ENCODE measurements at regions of chr3 and their contacts with region 1.

Region 1: DNA sequence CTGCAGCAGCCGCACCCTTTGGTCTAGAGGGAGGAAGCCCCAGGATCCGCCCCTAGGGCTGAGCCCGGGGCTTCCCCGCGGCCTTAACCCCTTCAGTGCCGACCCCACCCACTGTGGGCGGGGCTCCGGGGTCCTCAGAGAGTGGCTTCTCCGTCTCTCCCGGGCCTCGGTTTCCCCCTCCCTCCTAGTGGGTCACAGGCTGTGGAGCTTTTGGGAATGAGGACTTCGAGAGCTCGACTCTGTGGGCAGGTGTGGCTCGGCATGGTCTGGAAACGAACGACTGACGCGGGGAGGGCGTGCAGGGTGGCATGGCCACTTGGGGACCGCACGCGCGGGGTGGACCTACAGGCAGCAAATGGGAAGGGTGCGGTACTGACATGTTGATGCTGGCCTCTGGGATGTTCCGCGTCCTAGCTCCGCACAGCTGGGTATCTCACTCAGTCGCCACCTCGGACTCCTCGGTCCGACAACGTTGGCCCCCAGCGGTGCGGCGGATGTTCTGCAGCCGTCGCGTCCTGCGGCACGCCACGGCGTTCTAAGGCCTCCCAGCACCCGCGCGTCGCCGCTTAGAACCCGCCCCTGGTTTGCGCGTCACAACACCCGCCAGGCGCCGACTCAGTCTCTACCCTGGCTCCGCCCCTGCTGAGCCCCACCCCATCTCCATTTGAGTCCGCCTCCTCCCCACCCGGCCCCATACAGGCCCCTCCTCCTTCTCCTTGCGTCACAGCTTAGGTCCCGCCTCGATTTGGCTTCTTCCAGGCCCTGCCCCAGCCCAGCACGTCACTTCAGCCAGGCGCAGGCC is at the starts of genes HYAL3 and NAA80:
- DNase-seq: peak; percentile 99
- H3K4me3 Mint-ChIP-seq: peak within 1 kb of the TSS; percentile 94
- H3K27ac Mint-ChIP-seq: peak within 1 kb of the TSS; percentile 95
- H3K4me1 Mint-ChIP-seq: peaks cover 15% of the 10 kb centered on the region
- H3K27me3 Mint-ChIP-seq: no peaks in the 10 kb centered on the region
- total RNA-seq, gene HYAL3: 7.9 and 8.0 TPM in 2 replicates
- total RNA-seq, gene NAA80: 18.1 and 19.6 TPM in 2 replicates

Region 2: DNA sequence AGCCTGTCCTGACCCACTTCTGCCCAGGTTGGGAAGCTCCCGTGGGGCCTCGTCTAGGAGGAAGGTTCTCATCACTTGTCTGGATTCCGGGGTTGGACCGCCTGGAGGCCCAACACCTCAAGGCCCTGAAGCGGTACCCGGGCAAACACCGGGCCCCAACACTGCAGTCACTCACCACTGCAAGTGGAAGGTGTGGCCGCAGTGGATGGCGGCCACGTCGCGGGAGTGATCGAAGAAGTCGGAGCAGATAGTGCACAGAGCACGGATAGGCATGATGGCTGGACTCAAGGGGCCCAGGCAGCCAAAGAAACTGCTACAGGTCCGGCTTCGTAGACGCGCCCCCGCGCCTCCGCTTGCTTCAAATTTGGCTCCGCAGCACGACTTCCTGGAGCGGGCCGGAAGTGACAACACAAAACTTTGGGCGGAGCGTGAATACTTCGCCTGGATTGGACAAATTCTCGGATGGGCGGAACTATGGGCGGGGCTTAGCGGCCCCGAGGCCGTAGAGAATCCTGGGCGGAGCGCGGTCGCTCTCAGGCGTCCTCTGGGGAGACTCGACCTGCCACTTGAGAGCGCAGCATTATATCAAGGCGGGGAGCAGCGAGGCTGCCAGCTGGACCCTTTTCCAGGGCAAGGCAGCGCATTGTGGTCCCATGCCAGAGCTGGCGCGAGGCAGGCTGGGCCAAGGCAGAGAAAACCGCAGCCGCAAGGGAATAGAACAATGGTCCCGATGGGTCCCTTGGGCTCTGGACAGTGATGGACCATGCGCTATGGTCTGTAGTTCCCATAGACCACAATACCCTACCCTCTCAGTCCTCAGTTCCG is 442.6 kb before region 1 on chr3 and contains the start of gene TRAIP:
- intact Hi-C with region 1: loop called (anchors 2 kb)
- DNase-seq: peak; percentile 93
- H3K4me3 Mint-ChIP-seq: peak within 1 kb of the TSS; percentile 97
- H3K27ac Mint-ChIP-seq: peak within 1 kb of the TSS; percentile 93
- H3K4me1 Mint-ChIP-seq: peaks cover 18% of the 10 kb centered on the region
- H3K27me3 Mint-ChIP-seq: no peaks in the 10 kb centered on the region
- total RNA-seq, gene TRAIP: 26.5 and 27.9 TPM in 2 replicates

Region 3: GRCh38 chr3:50192689-50193141 is 106.3 kb before region 1 on chr3:
- intact Hi-C with region 1: loop called (anchors 1 kb)
- DNase-seq: peak; percentile 72
- H3K4me3 Mint-ChIP-seq: no peak overlapping the region
- H3K27ac Mint-ChIP-seq: no peak overlapping the region
- H3K4me1 Mint-ChIP-seq: peaks cover 6% of the 10 kb centered on the region
- H3K27me3 Mint-ChIP-seq: peaks cover 18% of the 10 kb centered on the region

Region 4: GRCh38 chr3:50245831-50246516 is 53.1 kb before region 1 on chr3:
- intact Hi-C with region 1: loop called (anchors 1 kb)
- DNase-seq: peak; percentile 88
- H3K4me3 Mint-ChIP-seq: peak overlapping the region; percentile 82
- H3K27ac Mint-ChIP-seq: peak overlapping the region; percentile 98
- H3K4me1 Mint-ChIP-seq: peaks cover 70% of the 10 kb centered on the region
- H3K27me3 Mint-ChIP-seq: no peaks in the 10 kb centered on the region

Region 5: GRCh38 chr3:50337191-50337841 is 38.3 kb after region 1 on chr3:
- intact Hi-C with region 1: loop called (anchors 1 kb)
- DNase-seq: peak; percentile 96
- H3K4me3 Mint-ChIP-seq: peak overlapping the region; percentile 96
- H3K27ac Mint-ChIP-seq: peak overlapping the region; percentile 97
- H3K4me1 Mint-ChIP-seq: peaks cover 51% of the 10 kb centered on the region
- H3K27me3 Mint-ChIP-seq: no peaks in the 10 kb centered on the region

Region 6: DNA sequence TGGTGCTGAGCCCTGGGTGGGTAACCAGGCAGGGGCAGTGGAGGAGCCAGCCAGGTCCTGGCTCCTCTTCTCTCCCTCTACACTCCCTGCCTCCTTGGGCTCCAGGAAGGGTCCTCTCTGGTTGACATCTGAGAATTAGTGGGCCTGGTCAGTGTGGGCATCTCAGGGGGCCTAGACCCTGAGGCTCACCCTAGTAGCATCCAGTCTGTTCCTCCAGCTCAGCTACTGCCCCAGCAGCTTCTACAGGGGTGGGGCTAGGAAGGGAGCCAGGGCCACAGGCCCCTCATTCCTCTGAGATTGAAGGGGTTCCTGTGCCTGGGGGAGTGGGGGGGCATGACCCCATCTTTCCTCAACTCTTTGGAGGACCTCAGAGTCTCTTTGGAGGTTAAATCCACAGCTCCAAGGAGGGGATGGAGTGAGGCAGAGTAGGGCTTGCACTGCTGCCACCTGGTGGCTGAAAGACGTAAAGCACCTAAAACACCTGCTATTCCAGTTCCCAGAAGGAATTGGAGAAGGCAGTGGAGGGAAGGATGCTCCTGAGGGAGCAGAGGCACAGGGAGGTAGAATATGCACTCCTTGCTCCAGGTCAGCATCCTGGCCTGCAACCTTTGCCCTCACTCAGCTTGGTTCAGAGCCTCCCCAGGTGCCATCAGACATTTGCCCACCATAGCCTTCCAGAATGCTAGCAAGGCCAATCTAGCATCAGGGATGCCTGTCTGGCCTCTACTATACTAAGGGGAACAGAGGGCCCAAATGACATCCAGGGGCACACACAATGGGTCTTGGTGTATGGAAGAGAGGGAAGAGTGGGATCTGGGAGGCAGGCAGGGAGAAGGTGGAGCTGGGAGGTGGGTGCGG is 243.4 kb after region 1 on chr3:
- intact Hi-C with region 1: no loop called
- DNase-seq: peak; percentile 28
- H3K4me3 Mint-ChIP-seq: no peak overlapping the region
- H3K27ac Mint-ChIP-seq: no peak overlapping the region
- H3K4me1 Mint-ChIP-seq: no peaks in the 10 kb centered on the region
- H3K27me3 Mint-ChIP-seq: peaks cover 19% of the 10 kb centered on the region

Region 7: DNA sequence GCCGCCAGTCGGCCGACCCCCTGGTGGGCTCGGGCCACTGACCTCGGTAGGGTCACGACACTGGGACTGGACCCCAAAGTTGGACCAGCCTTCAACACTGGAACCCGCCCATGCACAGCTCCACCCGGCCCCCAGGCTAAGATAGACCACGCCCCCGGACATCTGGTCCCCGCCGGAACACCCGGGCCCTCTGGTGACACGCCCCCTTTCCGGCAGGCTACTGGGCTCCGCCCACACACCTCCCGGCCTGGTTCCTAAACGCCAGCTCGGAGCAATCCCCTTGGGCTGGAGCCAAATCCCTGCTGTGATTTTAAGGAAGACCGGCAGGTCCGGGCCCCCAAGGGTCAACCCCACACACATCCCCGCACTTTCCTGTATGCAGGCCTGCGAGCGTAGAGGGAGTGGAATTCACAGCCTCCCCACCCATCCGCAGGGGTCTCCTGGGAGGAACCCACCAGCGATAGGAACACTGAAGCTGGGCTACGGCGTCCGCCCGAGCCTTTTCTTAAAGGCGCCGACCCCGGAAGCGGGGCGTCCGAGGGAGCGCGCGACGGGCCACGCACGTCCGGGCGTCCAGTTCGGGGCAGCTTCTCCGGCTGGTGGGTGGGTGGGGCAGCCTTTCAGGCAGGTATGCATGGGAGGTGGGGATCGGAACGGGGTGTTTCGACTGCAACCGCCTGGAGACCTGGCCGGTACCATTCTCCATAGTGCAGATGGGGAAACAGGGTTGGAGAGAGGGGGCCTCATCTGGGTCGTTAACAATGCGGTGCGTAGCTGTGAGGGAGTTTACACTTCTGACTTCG is 270.1 kb after region 1 on chr3 and contains the start of gene HEMK1:
- intact Hi-C with region 1: loop called (anchors 1 kb)
- DNase-seq: peak; percentile 92
- H3K4me3 Mint-ChIP-seq: peak within 1 kb of the TSS; percentile 97
- H3K27ac Mint-ChIP-seq: peak within 1 kb of the TSS; percentile 97
- H3K4me1 Mint-ChIP-seq: peaks cover 78% of the 10 kb centered on the region
- H3K27me3 Mint-ChIP-seq: no peaks in the 10 kb centered on the region
- total RNA-seq, gene HEMK1: 54.1 and 58.0 TPM in 2 replicates